ENCODE measurements at regions of chr18 and their contacts with region 1.

Region 1: DNA sequence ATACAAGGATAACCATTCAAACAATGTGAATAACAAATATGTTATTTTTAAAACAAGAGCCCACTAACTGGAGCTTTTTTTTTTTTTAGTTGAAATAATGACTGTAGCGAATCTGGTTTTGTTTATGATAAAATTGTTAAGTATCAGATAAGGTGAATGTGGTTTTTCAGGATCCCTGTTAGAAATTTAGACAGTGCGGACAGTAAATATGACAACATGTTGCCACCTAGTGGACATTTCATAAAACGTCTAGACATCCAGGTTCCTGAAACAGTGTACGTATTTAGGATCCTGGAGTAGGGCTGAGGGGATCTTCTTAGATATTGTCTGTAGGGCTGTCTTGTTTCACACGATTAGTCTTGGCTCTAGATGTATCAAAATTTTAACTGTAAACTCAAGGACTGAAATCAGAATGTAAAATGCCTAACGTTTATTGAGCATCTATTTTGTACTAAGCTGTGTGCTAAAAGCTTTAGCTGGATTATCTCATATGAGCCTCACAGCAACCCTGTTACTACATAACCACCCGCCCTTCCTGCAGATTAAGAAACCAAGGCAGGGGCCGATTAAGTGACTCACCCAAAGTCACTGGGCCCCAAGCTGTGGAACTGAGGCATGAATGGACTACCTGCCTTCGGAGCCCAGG is 23.9 kb upstream of the CCDC68 start:
- DNase-seq: no peak
- ATAC-seq: peak; percentile 47

Region 2: DNA sequence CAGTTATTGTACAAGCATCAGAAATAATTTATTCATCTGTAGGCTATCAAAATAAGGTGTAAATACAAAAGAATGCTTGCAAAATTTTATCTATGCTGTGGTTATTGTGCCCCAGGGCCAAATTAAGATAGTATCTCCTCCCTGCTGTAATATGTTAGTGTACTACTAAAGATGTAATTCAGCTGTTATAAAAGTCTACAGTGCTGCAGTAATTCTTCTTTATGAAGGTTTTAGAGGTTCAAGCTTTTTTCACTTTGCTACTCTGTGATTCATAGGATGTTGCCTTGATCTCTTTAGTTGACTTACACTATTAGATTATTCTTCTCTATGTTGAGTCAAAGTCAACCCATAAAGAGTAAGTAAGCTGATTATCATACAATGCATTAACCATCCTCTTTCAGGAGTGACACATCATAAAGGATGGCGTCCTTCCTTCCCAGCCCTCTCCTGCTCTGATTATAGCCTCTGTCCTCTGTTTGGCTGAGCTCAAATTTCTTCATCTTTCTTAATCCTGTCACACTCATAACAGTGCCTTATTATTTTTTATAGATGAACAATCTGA is 421.4 kb before region 1 on chr18:
- intact Hi-C with region 1: loop called (anchors 5 kb)
- DNase-seq: no peak
- ATAC-seq: no peak

Region 3: DNA sequence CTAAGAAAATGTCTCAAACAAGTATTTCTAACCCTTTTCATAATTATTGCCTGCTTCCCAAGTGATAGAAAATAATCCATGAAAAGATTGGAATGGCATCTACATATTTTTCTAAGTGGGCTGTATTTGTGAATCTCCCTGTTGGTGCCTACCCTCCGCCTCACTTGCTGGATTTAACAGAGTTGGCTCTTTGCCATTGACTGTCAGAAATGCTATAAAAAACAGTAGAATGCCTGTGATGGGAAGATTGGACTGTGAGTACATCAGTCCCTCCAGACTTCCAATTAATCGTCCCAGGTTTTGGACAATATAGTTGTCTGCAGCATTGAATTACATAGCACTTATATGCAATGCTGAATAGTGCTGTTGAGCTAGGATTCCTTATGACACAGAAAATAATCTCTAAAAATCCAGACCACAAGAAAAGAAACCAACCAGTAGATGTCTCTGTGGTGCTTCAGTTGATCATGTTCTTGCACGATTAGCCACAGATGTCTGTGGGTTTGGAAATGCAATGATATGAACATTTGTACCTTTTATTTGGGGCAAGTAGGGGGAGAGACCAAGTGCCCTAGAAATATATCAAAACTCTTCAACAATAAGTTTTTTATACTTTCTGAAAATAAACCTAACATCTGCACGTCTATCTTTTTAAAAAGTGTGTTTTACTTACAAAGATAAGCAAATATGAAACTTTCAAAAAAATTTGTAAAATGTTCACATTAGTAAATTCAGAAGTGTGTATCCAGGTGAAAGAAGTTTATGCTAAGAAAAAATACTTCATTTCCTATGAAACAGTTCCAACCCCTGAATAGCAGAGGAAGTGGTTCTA is 303.6 kb before region 1 on chr18:
- intact Hi-C with region 1: loop called (anchors 5 kb)
- DNase-seq: no peak
- ATAC-seq: peak; percentile 30

Region 4: DNA sequence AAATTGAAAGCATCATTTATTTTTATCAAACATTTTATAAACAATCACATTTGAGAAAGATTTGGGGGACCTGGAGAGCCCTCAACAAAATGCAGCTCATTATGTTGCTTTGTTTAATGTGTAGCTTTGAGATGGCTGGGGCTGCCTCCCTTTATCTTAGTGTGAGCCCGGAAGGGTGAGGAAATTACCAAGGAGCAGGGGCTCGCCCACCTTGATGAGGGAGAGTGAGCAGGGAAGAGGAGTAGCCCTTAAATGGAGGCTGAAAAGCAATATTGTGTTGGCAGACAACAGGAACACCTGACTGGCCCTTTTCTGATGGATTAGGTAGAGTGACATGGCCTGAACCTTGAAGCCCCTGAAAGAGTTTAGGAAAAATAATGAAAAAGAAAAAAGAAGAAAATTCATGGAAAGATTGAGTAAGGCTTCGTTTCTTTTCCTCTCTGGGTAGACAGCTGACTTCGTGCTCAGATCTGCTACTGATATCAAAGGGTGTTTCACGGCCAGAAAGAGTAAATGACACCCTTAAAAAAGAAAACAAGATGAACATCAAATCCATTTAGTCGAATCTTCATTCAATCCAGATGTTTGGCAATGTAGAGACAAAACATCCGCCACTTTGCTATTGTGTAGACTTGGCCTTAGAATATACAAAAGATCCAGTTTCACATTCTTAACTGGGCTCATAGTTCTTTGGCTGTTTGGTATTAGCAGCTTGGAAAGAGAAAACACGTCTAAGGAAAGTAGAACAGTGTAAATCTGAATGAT is 811.3 kb after region 1 on chr18:
- intact Hi-C with region 1: no loop called
- DNase-seq: no peak
- ATAC-seq: peak; percentile 60

Measured in left ventricle myocardium superior (tissue), 1 donor.